WTC11 (cell line): ENCODE measurements at regions of chr10 and their contacts with region 1.

Region 1: DNA sequence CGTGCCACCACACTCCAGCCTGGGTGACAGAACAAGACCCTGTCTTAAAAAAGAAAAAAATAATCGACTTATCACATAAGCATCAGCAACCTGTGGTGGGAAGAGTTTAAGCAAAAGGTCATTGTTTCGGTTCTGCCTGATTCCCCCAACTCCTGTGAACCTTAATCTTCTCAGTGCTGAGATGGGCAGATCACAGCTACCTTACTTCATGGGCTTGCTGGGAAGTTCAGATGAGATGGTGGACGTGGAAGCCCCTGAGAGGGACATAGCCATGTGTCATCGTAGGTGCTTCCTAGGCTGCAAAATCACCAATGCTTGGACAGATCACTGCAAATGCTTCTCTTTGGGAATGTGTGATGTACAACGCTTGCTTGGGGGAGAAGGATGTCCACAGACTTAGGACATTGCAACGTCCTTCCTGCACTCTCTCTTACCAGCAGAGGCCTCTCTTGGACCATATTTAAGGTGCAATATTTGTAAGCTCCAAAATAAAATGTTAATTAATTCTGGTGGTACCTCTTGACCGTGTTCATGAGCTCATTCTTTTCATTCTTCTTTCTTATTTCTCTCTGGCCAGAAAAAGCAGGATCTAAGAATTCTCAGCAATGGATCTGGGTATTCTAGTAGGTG is 8.6 kb downstream of the GJD4 start:
- DNase-seq: no peak
- ATAC-seq: peak; percentile 47; the same call in 1 of the 2 replicates
- H3K4me3 Mint-ChIP-seq: no peak overlapping the region
- H3K27ac Mint-ChIP-seq: no peak overlapping the region
- H3K4me1 Mint-ChIP-seq: peaks cover 5% of the 10 kb centered on the region; the same call in 1 of the 2 replicates
- H3K27me3 Mint-ChIP-seq: peaks cover 4% of the 10 kb centered on the region; the same call in 1 of the 2 replicates
- CTCF ChIP-seq: no peak

Region 2: DNA sequence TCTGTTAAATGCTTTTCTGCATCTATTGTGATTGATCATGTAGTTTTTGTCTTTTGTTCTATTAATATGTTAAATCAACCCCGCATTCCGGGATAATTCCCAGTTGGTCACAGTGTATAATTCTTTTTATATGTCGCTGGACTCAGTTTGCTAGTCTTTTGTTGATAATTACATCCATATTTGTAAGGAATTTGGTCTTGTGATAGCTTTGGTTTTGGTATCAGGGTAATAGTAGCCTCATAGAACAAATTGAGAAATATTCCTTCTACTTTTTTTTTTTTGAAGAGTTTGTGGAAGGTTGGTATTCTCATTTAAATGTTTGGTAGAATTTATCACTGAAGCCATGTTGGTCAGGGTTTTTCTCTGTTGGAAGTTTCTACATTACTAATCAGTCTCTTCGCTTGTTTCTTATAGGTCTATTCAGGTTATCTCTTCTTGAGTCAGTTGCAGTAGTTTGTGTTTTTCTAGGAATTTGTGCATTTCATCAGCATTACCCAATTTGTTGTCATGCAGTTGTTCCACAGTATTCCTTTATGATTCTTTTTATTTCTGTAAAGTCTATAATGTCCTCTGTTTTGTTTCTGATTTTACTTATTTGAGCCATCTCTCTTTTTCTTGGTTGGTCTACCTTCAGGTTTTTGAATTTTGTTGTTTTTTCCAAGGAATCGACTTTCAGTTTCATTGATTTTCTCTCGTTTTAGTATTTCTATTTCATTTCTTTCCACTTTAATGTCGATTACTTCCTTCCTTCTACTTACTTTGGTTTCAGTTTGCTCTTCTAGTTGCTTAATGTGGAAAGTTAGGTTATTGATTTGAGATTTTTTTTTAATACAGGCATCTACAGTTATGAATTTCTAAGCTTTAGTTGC is 73.2 kb before region 1 on chr10:
- CTCF ChIA-PET with region 1: no interaction called
- POLR2A ChIA-PET with region 1: no interaction called
- DNase-seq: no peak
- ATAC-seq: no peak
- H3K4me3 Mint-ChIP-seq: no peak overlapping the region
- H3K27ac Mint-ChIP-seq: no peak overlapping the region
- H3K4me1 Mint-ChIP-seq: peaks cover 17% of the 10 kb centered on the region
- H3K27me3 Mint-ChIP-seq: no peaks in the 10 kb centered on the region
- CTCF ChIP-seq: no peak

Region 3: GRCh38 chr10:35554461-35555056 is 59.2 kb before region 1 on chr10:
- CTCF ChIA-PET with region 1: no interaction called
- POLR2A ChIA-PET with region 1: no interaction called
- DNase-seq: no peak
- ATAC-seq: no peak
- H3K4me3 Mint-ChIP-seq: no peak overlapping the region
- H3K27ac Mint-ChIP-seq: no peak overlapping the region
- H3K4me1 Mint-ChIP-seq: peaks cover 5% of the 10 kb centered on the region; the same call in 1 of the 2 replicates
- H3K27me3 Mint-ChIP-seq: no peaks in the 10 kb centered on the region
- CTCF ChIP-seq: no peak

Region 4: GRCh38 chr10:35574924-35575352 is 38.8 kb before region 1 on chr10:
- CTCF ChIA-PET with region 1: interaction called, 28 read pairs
- POLR2A ChIA-PET with region 1: no interaction called
- DNase-seq: peak; percentile 55
- ATAC-seq: peak; percentile 73
- H3K4me3 Mint-ChIP-seq: no peak overlapping the region
- H3K27ac Mint-ChIP-seq: no peak overlapping the region
- H3K4me1 Mint-ChIP-seq: peaks cover 14% of the 10 kb centered on the region
- H3K27me3 Mint-ChIP-seq: no peaks in the 10 kb centered on the region
- CTCF ChIP-seq: no peak; the same call in 1 of the 2 replicates

Region 5: DNA sequence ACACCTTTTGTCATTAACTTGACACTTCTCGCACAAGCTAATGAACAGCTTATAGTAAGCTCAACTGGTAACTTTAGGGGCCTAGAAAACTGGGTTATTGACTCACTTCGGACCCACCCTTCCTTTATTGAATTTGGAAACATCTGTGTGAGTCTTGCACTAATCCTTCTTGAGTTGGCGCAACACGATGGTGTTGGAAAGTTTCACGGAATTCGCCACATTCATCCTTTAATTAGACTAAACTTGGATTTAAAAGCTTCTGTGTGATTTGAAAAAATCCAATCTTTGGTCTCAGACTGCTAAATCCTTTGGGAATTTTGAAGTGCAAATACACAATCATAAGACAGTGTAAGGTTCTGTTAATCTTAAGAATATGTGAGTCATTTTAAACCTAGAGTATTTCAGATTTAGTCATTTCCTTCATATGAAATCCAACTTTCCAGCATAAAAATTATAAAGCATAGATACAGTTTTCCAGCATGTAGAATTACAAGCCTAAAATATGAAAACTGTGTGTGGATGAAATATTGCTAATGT is 13.3 kb after region 1 on chr10:
- CTCF ChIA-PET with region 1: interaction called, 17 read pairs
- POLR2A ChIA-PET with region 1: no interaction called
- DNase-seq: no peak
- ATAC-seq: no peak
- H3K4me3 Mint-ChIP-seq: no peak overlapping the region
- H3K27ac Mint-ChIP-seq: no peak overlapping the region
- H3K4me1 Mint-ChIP-seq: no peaks in the 10 kb centered on the region
- H3K27me3 Mint-ChIP-seq: no peaks in the 10 kb centered on the region
- CTCF ChIP-seq: no peak

Region 6: DNA sequence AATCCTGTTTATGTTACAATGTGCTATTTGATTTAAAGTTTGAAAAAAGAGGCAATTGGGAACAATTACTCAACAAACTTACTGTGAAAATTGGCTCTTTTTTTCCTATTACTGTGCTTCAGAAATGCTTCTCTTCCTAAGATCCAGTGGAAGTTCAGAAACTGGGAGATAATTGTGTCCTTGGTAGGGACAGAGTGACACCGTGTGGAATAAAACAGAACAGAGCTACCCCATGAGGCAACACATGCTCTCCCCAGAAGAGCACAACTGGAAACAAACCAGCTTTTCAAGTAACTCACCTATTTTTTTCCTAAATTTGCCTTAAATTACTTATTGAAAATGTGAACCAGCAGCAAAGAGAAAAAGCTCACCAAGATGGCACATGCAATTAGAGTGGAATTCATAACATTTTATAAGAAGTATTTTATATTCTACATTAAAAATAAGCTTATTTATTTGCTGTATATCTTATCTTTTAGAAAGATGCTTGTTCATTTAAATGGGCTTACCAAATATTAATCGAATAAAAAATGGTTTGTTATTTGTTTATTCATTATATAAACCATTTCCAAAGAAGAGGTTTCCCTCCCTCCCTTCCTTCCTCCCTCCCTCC is 1165.6 kb after region 1 on chr10:
- CTCF ChIA-PET with region 1: interaction called, 13 read pairs
- POLR2A ChIA-PET with region 1: no interaction called
- DNase-seq: peak; percentile 24
- ATAC-seq: peak; percentile 87
- H3K4me3 Mint-ChIP-seq: no peak overlapping the region
- H3K27ac Mint-ChIP-seq: no peak overlapping the region
- H3K4me1 Mint-ChIP-seq: peaks cover 6% of the 10 kb centered on the region
- H3K27me3 Mint-ChIP-seq: no peaks in the 10 kb centered on the region
- CTCF ChIP-seq: no peak